CD4-positive, alpha-beta memory T cell (primary cell): ENCODE measurements at regions of chr21 and their contacts with region 1.

Region 1: DNA sequence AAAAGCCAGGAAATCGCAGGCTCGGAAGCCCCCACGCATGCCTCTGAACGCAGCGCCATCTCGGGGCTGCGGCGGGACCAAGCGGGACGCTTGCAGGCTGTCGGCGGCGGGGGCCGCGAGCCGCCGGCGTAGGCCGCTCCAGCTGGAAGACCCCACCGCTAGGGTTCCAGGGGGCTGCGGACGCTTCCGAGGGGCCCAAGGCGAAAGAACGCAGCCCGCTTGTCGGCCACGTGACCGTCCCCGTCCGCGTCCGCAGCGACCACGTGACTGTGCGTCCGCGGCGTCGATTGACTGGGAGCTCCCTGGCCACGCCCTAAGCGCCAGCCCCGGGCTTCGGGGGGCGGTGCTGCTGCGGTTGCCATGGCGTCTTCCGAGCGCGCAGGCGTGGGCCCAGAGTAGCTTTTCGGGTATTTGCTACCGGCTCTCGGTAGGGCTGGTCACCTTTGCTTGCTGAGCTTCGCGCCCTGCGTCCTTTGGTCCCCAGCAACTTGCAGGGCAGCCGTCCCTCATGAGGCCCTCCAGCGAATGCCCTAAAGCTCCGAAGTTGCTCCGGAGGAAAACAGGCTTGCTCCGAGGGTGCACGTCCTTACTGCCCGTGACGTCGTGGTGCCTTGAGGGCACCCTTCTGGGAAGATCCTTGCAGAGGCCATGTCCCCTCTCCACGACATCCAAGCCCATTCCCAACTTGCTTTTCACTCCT is 197.2 kb downstream of the DYRK1A start:
- DNase-seq: peak; percentile 91 to 92 (median 92)
- H3K4me3 ChIP-seq: peak overlapping the region; percentile 94 to 98
- H3K4me3 Mint-ChIP-seq: peak overlapping the region; percentile 95 to 100 (median 97)
- H3K27ac ChIP-seq: peak overlapping the region; percentile 91
- H3K27ac Mint-ChIP-seq: peak overlapping the region; percentile 98 to 100 (median 100)
- H3K4me1 ChIP-seq: peaks cover 17% of the 10 kb centered on the region
- H3K4me1 Mint-ChIP-seq: peaks cover 5 to 28% (median 14%) of the 10 kb centered on the region in 4 donors
- H3K27me3 ChIP-seq: no peaks in the 10 kb centered on the region
- H3K27me3 Mint-ChIP-seq: no peaks in the 10 kb centered on the region

Region 2: DNA sequence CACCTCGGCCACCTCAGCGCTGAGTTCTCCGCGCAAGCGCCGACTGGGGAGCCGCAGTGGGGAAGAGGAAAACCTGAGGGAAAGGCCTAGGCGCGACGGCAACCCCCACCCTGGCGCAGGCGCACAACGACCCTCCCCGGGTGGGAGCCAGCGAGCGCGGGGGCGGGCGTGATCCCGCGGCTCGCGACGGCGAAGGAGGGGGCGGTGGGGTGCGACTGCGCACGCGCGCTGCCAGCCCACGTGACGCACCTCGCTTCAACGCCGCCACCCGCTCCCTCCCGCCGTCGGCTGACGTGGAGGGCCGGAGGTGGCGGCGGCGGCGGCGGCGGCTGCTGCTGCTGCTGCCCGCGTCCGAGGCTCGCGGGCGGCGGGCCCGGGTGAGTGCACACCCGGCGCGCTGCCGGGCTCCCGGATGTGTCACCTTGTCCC is 490.8 kb before region 1 on chr21 and contains the starts of genes PIGP and TTC3:
- CTCF ChIA-PET with region 1: no interaction called
- POLR2A ChIA-PET with region 1: interaction called, 6 read pairs
- intact Hi-C with region 1: loop called (anchors 1 kb)
- DNase-seq: peak; percentile 93 to 97 (median 96)
- H3K4me3 ChIP-seq: peak within 1 kb of the TSS; percentile 83 to 91
- H3K4me3 Mint-ChIP-seq: peak within 1 kb of the TSS; percentile 95 to 100 (median 98)
- H3K27ac ChIP-seq: peak within 1 kb of the TSS; percentile 91
- H3K27ac Mint-ChIP-seq: peak within 1 kb of the TSS; percentile 92 to 100 (median 98)
- H3K4me1 ChIP-seq: peaks cover 36% of the 10 kb centered on the region
- H3K4me1 Mint-ChIP-seq: peaks cover 31 to 63% (median 44%) of the 10 kb centered on the region in 4 donors
- H3K27me3 ChIP-seq: no peaks in the 10 kb centered on the region
- H3K27me3 Mint-ChIP-seq: no peaks in the 10 kb centered on the region
- total RNA-seq, gene PIGP: 17.2 to 19.7 TPM
- total RNA-seq, gene TTC3: 163 to 171 TPM

Region 3: GRCh38 chr21:37267269-37268184 is 296.3 kb before region 1 on chr21 and contains the start of gene VPS26C:
- CTCF ChIA-PET with region 1: interaction called, 7 read pairs
- POLR2A ChIA-PET with region 1: interaction called, 45 read pairs
- intact Hi-C with region 1: loop called (anchors 1 kb)
- DNase-seq: peak; percentile 97 to 99 (median 99)
- H3K4me3 ChIP-seq: peak within 1 kb of the TSS; percentile 80 to 83
- H3K4me3 Mint-ChIP-seq: peak within 1 kb of the TSS; percentile 92 to 96 (median 94)
- H3K27ac ChIP-seq: peak within 1 kb of the TSS; percentile 92
- H3K27ac Mint-ChIP-seq: peak within 1 kb of the TSS; percentile 97 to 99 (median 98)
- H3K4me1 ChIP-seq: peaks cover 43% of the 10 kb centered on the region
- H3K4me1 Mint-ChIP-seq: peaks cover 33 to 64% (median 44%) of the 10 kb centered on the region in 4 donors
- H3K27me3 ChIP-seq: no peaks in the 10 kb centered on the region
- H3K27me3 Mint-ChIP-seq: peaks cover 0 to 4% of the 10 kb centered on the region in 2 donors
- total RNA-seq, gene VPS26C: 76.0 to 79.7 TPM

Region 4: DNA sequence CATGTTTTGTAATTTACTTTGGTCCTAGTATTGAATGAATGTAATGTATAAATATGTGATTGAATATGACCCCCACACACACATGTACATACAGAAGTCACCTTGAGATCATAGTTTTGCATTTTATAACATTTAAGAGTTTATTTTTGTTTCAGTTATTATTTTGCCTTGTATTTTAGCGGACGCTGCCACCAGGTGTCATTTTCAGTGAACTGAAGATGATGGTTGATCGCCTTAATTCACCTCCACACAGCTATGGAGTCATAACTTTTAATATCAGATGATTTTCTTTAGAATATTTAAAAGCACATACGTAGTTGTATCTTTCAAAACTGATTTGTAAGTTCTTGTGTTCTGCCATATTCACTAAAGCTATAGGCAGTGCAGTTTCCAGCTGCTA is 66.8 kb before region 1 on chr21:
- CTCF ChIA-PET with region 1: interaction called, 10 read pairs
- POLR2A ChIA-PET with region 1: interaction called, 6 read pairs
- intact Hi-C with region 1: loop called (anchors 10 kb)
- DNase-seq: no peak
- H3K4me3 ChIP-seq: no peak overlapping the region
- H3K4me3 Mint-ChIP-seq: no peak overlapping the region
- H3K27ac ChIP-seq: no peak overlapping the region
- H3K27ac Mint-ChIP-seq: peak overlapping the region in 2 of 7 donors; percentile 18 to 42
- H3K4me1 ChIP-seq: no peaks in the 10 kb centered on the region
- H3K4me1 Mint-ChIP-seq: peaks cover 18 to 33% (median 20%) of the 10 kb centered on the region in 4 donors
- H3K27me3 ChIP-seq: no peaks in the 10 kb centered on the region
- H3K27me3 Mint-ChIP-seq: no peaks in the 10 kb centered on the region

Region 5: DNA sequence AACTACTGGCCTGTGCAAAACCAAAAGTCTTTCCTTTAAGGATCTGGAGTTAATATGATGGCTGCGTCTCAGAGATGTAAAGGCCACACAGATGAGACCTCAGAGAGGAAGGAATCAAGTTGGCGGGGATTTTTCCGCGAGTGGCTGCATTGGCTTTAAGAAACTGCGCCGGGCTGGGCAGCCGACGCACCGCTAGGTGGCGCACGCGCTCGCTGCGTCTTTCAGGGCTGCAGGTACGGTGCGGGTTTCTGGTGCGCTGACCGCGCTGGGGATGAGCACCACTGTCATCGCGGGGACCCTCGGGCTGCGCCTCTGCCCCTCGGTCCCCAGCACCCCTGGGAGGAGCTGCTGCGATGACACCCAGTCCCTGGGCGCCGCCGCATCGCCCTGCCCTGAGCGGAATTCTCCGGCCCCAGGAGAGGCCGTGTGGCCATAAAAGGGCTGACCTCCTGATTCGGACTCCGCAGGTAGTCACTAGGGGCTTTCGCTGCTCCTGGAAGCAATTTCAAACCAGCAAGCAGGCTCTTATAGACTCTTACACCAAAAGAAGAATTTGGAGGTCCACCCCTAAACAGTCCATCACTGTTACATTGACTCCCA is 111.5 kb after region 1 on chr21:
- CTCF ChIA-PET with region 1: interaction called, 6 read pairs
- POLR2A ChIA-PET with region 1: no interaction called
- intact Hi-C with region 1: loop called (anchors 1 kb)
- DNase-seq: peak in 4 of 5 donors; percentile 22 to 42 (median 33)
- H3K4me3 ChIP-seq: no peak overlapping the region
- H3K4me3 Mint-ChIP-seq: peak overlapping the region in 1 of 8 donors; percentile 26
- H3K27ac ChIP-seq: no peak overlapping the region
- H3K27ac Mint-ChIP-seq: no peak overlapping the region
- H3K4me1 ChIP-seq: peaks cover 6% of the 10 kb centered on the region
- H3K4me1 Mint-ChIP-seq: peaks cover 0 to 3% (median under 1%) of the 10 kb centered on the region in 4 donors
- H3K27me3 ChIP-seq: no peaks in the 10 kb centered on the region
- H3K27me3 Mint-ChIP-seq: peaks cover 11 to 22% of the 10 kb centered on the region in 2 donors